Left cardiac atrium (tissue), 4 donors: ENCODE measurements at regions of chr15 and their contacts with region 1.

Region 1: DNA sequence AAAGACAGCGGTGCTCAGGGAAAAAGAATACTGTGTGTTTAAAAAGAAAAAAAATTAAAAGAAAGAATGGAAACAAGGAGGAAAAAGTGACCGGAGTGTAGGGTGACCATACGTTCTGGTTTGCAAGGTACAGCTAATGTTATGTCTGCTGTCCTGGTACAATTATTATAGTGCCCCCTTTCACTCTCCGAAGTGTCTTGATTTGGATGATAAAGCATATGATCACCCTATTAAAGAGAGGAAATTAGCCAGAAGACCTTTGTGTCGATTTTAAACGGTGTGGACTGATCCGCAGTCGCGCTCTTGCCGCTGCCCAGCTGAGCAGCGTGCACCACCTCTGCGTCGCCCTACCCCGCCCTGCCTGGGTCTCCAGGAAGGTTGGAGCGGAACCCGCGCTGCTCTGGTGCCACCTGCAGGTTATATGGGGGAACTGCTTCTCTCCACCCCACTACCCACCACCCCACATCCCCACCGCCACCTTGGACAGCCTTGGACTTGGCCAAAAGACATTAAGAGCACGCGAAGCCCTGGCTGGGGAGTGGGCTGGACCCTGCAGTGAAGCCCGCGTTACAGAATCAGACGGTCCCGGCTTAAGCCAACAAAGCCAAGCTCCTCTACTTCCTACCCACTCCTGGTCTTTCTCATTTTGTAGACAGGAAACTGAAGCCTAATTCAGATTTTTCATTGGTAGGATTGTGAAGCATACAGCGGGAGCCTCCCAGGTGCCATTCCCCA is 41.2 kb upstream of the UBE2Q2 start:
- DNase-seq: peak; percentile 84
- ATAC-seq: peak; percentile 99

Region 2: GRCh38 chr15:75616764-75617163 is 185.3 kb before region 1 on chr15:
- intact Hi-C with region 1: no loop called
- DNase-seq: no peak
- ATAC-seq: no peak

Region 3: GRCh38 chr15:75723847-75724660 is 78.0 kb before region 1 on chr15:
- intact Hi-C with region 1: loop called in 1 of 2 experiments (anchors 5 kb)
- DNase-seq: peak; percentile 96
- ATAC-seq: peak; percentile 90 to 93

Region 4: GRCh38 chr15:75738647-75739331 is 63.2 kb before region 1 on chr15:
- intact Hi-C with region 1: loop called in 1 of 2 experiments (anchors 10 kb)
- DNase-seq: peak; percentile 96
- ATAC-seq: peak; percentile 98 to 99

Region 5: GRCh38 chr15:75988989-75989388 is 187.0 kb after region 1 on chr15:
- intact Hi-C with region 1: no loop called
- DNase-seq: no peak
- ATAC-seq: no peak